ENCODE measurements at regions of chr22 and their contacts with region 1.

Region 1: DNA sequence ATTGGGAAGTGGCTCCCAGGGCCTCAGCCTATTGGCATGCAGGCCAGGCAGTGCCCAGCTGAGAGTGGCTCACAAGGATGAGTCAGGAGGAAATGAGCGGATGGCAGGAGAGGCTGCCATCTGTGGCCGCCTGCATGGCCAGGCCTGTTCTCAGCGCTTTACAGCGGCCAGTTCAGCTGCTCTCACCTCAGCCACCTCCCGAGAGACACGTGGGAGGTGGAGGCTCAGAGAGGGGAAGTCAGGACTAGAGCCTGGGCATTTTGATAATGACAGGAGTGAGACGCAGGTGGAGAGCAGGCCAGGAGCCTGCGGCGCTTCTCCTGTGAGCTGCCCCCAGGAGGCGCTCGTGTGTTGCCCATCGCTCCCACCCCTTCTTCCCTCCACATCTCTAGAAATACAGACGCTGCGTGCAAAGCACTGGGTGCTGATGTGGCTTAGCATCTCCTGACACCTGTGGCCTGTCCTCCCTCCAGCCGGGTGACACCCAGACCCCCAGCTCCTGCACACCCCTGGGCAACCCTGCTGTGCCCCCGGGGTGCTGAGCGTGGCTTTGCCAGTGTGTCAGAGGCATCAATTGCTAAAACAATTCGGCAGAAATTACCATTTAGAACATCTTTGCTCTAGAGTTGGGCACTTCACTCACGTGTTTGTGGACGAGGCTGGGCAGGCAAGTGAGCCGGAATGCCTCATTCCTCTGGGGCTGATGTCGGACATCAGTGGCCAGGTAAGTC is 21.4 kb upstream of the PANX2 start:
- DNase-seq: peak in 4 of 10 donors; percentile 30 to 90 (median 55)
- H3K4me3 ChIP-seq: no peak overlapping the region
- H3K27ac ChIP-seq: peak overlapping the region in 28 of 59 donors; percentile 25 to 89 (median 64)
- H3K27me3 ChIP-seq: no peaks in the 10 kb centered on the region
- CTCF ChIP-seq: peak in 54 of 56 donors; percentile 12 to 77 (median 54)

Region 2: DNA sequence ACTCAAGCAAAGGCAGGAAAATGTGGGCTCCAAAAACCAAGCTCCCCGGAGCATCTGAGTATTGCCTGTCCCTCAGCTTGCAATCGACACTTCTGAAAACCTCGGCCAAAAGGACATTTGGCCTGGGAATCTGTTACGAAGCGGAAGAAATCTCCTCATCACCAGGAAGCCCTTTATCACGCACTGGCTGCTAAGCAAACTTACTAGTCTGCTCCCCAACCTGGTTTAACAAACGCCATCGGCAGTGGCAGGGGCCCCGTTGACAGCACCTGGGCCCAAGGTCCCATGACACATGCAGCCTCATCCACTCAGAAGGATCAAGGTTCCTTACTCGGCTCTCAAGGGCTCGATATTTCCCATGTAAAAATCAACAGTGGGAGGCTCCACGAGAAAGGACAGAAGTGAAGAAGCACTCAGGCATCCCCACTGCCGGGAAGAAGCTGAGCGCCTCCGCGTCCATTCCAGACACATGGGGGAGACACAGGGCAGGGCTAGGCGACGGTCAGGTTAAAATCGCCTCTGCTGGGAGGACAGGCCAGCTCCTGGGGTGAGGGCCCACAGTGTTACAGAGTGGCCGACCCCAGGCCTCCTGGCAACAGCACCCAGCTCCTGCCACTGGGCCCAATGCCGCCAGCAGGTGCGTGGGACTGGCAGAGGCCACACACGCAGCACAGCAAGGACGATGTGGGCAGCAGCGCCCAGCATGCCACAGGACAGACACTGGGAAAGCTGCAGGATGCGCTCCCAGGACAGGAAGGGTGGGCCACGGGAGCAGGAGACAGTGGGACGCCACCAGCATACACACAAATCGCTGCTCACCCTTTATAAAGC is 348.5 kb before region 1 on chr22:
- intact Hi-C with region 1: no loop called
- DNase-seq: peak in 1 of 10 donors; percentile 46
- H3K4me3 ChIP-seq: peak overlapping the region in 2 of 59 donors; percentile 6 to 18
- H3K27ac ChIP-seq: peak overlapping the region in 5 of 59 donors; percentile 17 to 70 (median 25)
- H3K27me3 ChIP-seq: no peaks in the 10 kb centered on the region
- CTCF ChIP-seq: no peak

Region 3: GRCh38 chr22:50209893-50210292 is 60.7 kb after region 1 on chr22:
- intact Hi-C with region 1: loop called (anchors 2 kb)
- DNase-seq: peak in 8 of 10 donors; percentile 55 to 83 (median 74)
- H3K4me3 ChIP-seq: no peak overlapping the region
- H3K27ac ChIP-seq: peak overlapping the region in 20 of 59 donors; percentile 0 to 74 (median 36)
- H3K27me3 ChIP-seq: no peaks in the 10 kb centered on the region
- CTCF ChIP-seq: peak; percentile 61 to 95 (median 86)